HepG2 (cell line): ENCODE measurements at regions of chr10 and their contacts with region 1.

Region 1: DNA sequence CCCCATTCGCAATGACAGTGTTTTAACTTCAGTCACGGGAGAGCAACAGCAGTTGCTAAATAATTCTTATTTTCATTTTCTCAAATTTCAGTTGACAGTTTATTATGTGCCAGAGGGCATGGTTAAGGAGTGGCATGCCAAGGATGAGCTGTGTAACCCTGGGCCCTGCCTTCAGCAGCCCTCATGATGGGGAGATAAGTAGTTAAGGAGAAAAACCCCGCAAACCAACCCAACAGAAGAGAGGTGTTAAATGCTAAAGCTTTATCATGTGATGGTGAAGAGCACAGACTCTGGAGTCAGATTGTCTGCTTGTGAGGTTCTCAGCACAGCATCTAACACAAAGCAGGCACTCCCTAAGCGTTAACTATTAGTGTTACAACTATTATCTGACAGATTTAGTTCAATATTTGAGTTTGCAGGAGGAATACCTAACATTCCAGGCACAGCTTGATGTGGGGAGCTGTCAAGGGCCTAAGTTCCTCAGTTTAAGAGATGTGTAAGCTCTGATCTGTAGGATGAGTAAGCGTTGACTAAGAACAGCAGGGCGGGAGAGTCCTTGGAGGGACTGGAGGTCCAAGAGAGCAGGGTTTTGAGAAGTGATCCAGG is 29.6 kb downstream of the STAM start:
- DNase-seq: peak; percentile 91
- ATAC-seq: peak; percentile 96
- H3K4me3 ChIP-seq: no peak overlapping the region
- H3K27ac ChIP-seq: peak overlapping the region; percentile 54
- H3K4me1 ChIP-seq: peaks cover 66% of the 10 kb centered on the region
- H3K27me3 ChIP-seq: no peaks in the 10 kb centered on the region
- CTCF ChIP-seq: no peak
- EP300 ChIP-seq: peak in 1 of 2 experiments; percentile 81; a peak in 2 of 4 replicates
- POLR2A ChIP-seq: no peak
- RAD21 ChIP-seq: no peak

Region 2: GRCh38 chr10:17649836-17650235 is 23.7 kb before region 1 on chr10:
- CTCF ChIA-PET with region 1: no interaction called
- POLR2A ChIA-PET with region 1: interaction called, 31 read pairs
- in situ Hi-C with region 1: no loop called
- intact Hi-C with region 1: loop called (anchors 2 kb)
- DNase-seq: no peak
- ATAC-seq: no peak
- H3K4me3 ChIP-seq: peak overlapping the region in 1 of 3 experiments; percentile 51; a peak in 2 of 6 replicates
- H3K27ac ChIP-seq: peak overlapping the region; percentile 98
- H3K4me1 ChIP-seq: peaks cover 85% of the 10 kb centered on the region
- H3K27me3 ChIP-seq: no peaks in the 10 kb centered on the region; a peak in 1 of 5 replicates
- CTCF ChIP-seq: no peak
- EP300 ChIP-seq: no peak
- POLR2A ChIP-seq: no peak
- RAD21 ChIP-seq: no peak

Region 3: DNA sequence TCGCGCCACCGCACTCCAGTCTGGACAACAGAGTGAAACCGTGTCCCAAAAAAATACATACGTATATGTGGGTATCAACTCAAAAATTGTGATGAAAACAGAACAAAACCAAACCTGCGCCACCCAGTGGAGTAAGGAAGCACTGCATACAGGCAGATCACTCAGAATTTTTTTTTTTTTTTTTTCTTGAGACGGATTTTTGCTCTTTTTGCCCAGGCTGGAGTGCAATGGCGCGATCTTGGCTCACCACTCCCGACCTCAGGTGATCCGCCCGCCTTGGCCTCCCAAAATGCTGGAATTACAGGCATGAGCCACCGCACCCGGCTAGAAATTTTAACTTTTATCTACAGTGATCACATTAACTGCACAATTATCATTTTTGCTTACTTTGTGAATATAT is 69.4 kb after region 1 on chr10:
- CTCF ChIA-PET with region 1: no interaction called
- POLR2A ChIA-PET with region 1: no interaction called
- in situ Hi-C with region 1: no loop called
- intact Hi-C with region 1: loop called (anchors 5 kb)
- DNase-seq: peak; percentile 30
- ATAC-seq: no peak
- H3K4me3 ChIP-seq: no peak overlapping the region
- H3K27ac ChIP-seq: no peak overlapping the region
- H3K4me1 ChIP-seq: peaks cover 17% of the 10 kb centered on the region
- H3K27me3 ChIP-seq: no peaks in the 10 kb centered on the region; a peak in 1 of 5 replicates
- CTCF ChIP-seq: peak; percentile 69
- EP300 ChIP-seq: no peak
- POLR2A ChIP-seq: no peak
- RAD21 ChIP-seq: peak; percentile 38; the same call in 1 of the 2 replicates